ENCODE measurements at regions of chr15 and their contacts with region 1.

Region 1: GRCh38 chr15:81274931-81275707 is 48.8 kb downstream of the STARD5 start:
- DNase-seq: peak; percentile 86
- ATAC-seq: peak; percentile 96
- H3K4me3 Mint-ChIP-seq: no peak overlapping the region
- H3K27ac Mint-ChIP-seq: peak overlapping the region; percentile 60
- H3K4me1 Mint-ChIP-seq: peaks cover 32% of the 10 kb centered on the region
- H3K27me3 Mint-ChIP-seq: no peaks in the 10 kb centered on the region

Region 2: GRCh38 chr15:81296673-81297072 is 21.6 kb after region 1 on chr15:
- CTCF ChIA-PET with region 1: interaction called, 243 read pairs
- POLR2A ChIA-PET with region 1: interaction called, 21 read pairs
- DNase-seq: peak; percentile 90
- ATAC-seq: peak; percentile 72
- H3K4me3 Mint-ChIP-seq: peak overlapping the region; percentile 99
- H3K27ac Mint-ChIP-seq: peak overlapping the region; percentile 93
- H3K4me1 Mint-ChIP-seq: peaks cover 53% of the 10 kb centered on the region
- H3K27me3 Mint-ChIP-seq: no peaks in the 10 kb centered on the region

Region 3: GRCh38 chr15:81311752-81312464 is 36.8 kb after region 1 on chr15:
- CTCF ChIA-PET with region 1: interaction called, 29 read pairs
- POLR2A ChIA-PET with region 1: interaction called, 11 read pairs
- DNase-seq: no peak
- ATAC-seq: no peak
- H3K4me3 Mint-ChIP-seq: no peak overlapping the region
- H3K27ac Mint-ChIP-seq: peak overlapping the region; percentile 54
- H3K4me1 Mint-ChIP-seq: peaks cover 65% of the 10 kb centered on the region
- H3K27me3 Mint-ChIP-seq: no peaks in the 10 kb centered on the region

Region 4: DNA sequence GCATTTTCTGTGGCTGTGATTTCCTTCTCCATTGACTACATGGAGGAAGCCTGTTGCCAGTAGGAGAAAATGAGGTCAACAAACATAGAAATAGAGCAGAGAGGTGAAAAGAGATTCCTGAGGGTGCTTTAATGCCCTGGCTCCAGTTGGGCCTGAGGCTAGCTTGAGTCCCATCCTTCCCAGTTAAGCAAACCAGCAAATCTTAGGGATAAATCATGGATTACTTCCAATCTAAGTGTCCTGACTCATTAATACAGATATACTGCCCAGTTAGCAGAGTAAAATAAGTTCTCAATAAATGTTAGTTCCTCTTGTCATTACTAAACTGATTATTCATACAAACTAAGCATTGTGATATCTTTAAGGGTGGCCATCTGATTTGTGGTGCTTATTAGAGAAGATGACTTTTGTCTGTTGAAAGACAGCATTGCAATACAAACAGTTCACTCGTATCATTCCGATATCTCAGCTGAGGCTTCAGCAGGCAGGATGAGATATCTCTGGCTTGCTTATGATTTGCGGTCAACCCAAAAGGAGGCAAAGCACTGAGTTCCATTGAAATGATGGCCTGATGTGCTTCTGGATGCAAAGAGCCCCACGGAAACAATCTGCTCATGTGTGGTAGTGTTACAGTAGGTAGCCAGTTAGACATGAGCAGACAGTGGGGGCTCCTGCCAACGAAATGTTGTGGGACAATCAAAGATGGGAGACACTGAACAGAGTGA is 55.4 kb after region 1 on chr15:
- CTCF ChIA-PET with region 1: interaction called, 73 read pairs
- POLR2A ChIA-PET with region 1: no interaction called
- DNase-seq: no peak
- ATAC-seq: no peak
- H3K4me3 Mint-ChIP-seq: no peak overlapping the region
- H3K27ac Mint-ChIP-seq: no peak overlapping the region
- H3K4me1 Mint-ChIP-seq: peaks cover 17% of the 10 kb centered on the region
- H3K27me3 Mint-ChIP-seq: no peaks in the 10 kb centered on the region

Region 5: DNA sequence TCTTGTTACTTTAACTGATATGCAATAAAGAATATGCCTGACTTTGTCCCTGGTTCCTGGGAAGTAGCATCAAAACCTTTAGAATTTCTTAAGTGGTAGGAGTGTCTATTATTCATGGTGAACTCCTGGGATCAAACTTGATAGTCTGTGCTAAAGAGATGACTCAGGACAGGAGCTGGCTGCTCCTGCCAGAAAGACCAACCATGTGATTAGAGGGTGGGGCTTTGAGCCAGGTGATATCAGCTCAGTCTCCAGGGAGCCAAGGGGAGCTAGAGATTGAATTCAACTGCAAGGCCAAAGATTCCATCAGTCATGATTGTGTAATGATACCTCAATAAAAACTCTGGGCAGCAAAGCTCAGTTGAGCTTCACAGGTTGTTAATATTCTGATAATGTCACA is 119.5 kb after region 1 on chr15:
- CTCF ChIA-PET with region 1: interaction called, 97 read pairs
- POLR2A ChIA-PET with region 1: no interaction called
- DNase-seq: no peak
- ATAC-seq: no peak
- H3K4me3 Mint-ChIP-seq: no peak overlapping the region
- H3K27ac Mint-ChIP-seq: no peak overlapping the region
- H3K4me1 Mint-ChIP-seq: no peaks in the 10 kb centered on the region
- H3K27me3 Mint-ChIP-seq: peaks cover 2% of the 10 kb centered on the region

Region 6: DNA sequence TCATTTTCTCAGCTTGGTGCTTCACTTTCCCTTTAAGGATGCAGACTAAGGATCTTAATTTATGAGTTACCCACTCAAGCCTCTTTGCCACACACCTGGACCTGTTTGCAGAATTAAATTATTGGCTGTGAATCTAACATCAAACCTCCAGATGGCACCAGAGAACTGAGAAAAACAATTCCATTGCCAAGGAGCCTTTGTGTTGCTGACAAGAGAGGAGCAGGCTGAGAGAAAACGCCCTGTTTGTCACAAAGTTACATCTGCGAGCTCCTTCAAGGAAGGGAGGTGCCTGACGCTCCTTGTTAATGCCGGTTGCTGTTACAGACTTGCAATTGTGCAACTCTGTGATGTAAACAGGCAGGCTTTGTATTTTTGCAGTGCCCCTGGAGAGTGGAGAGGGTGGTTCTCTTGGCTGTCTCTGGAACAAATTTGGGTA is 135.2 kb after region 1 on chr15:
- CTCF ChIA-PET with region 1: interaction called, 17 read pairs
- POLR2A ChIA-PET with region 1: interaction called, 4 read pairs
- DNase-seq: peak; percentile 49
- ATAC-seq: peak; percentile 65
- H3K4me3 Mint-ChIP-seq: no peak overlapping the region
- H3K27ac Mint-ChIP-seq: no peak overlapping the region
- H3K4me1 Mint-ChIP-seq: peaks cover 9% of the 10 kb centered on the region
- H3K27me3 Mint-ChIP-seq: peaks cover 16% of the 10 kb centered on the region

Measured in activated CD8-positive, alpha-beta T cell treated with anti-CD3 and anti-CD28 coated beads, Interleukin-2, amount 10 ng/mL, durations not matched to agents 7 days and 5 days (primary cell).